ENCODE measurements at regions of chr20 and their contacts with region 1.

Region 1: GRCh38 chr20:45044084-45044573 is 56.8 kb downstream of the KCNS1 start:
- DNase-seq: peak; percentile 52
- ATAC-seq: peak; percentile 86
- H3K4me3 Mint-ChIP-seq: no peak overlapping the region
- H3K27ac Mint-ChIP-seq: peak overlapping the region; percentile 93
- H3K4me1 Mint-ChIP-seq: peaks cover 76% of the 10 kb centered on the region
- H3K27me3 Mint-ChIP-seq: no peaks in the 10 kb centered on the region

Region 2: GRCh38 chr20:45061244-45061643 is 17.1 kb after region 1 on chr20:
- CTCF ChIA-PET with region 1: interaction called, 32 read pairs
- POLR2A ChIA-PET with region 1: no interaction called
- intact Hi-C with region 1: no loop called
- DNase-seq: peak; percentile 32
- ATAC-seq: peak; percentile 94
- H3K4me3 Mint-ChIP-seq: no peak overlapping the region
- H3K27ac Mint-ChIP-seq: no peak overlapping the region
- H3K4me1 Mint-ChIP-seq: peaks cover 76% of the 10 kb centered on the region
- H3K27me3 Mint-ChIP-seq: no peaks in the 10 kb centered on the region

Region 3: DNA sequence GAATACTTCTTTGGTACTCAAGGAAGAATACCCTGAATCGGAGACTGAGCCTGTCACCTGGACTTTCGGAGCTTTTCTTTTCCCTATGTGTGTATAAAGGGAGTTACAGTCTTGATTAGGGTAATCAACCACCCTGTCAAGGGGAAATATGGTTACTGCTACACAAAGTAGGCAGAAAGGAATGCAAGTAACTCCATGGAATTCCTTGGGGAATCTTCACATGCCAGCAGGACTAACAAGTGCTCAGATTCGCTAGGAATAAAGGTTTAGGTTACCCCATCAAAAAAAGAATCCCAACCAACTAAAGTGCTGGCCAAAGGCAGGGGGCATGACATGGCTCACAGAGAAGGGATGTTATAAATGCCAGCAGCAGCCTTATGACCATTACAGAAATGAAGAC is 46.4 kb after region 1 on chr20:
- CTCF ChIA-PET with region 1: interaction called, 136 read pairs
- POLR2A ChIA-PET with region 1: interaction called, 7 read pairs
- intact Hi-C with region 1: loop called in 1 of 2 experiments (anchors 1 kb)
- DNase-seq: no peak
- ATAC-seq: no peak
- H3K4me3 Mint-ChIP-seq: no peak overlapping the region
- H3K27ac Mint-ChIP-seq: no peak overlapping the region
- H3K4me1 Mint-ChIP-seq: no peaks in the 10 kb centered on the region
- H3K27me3 Mint-ChIP-seq: no peaks in the 10 kb centered on the region

Region 4: DNA sequence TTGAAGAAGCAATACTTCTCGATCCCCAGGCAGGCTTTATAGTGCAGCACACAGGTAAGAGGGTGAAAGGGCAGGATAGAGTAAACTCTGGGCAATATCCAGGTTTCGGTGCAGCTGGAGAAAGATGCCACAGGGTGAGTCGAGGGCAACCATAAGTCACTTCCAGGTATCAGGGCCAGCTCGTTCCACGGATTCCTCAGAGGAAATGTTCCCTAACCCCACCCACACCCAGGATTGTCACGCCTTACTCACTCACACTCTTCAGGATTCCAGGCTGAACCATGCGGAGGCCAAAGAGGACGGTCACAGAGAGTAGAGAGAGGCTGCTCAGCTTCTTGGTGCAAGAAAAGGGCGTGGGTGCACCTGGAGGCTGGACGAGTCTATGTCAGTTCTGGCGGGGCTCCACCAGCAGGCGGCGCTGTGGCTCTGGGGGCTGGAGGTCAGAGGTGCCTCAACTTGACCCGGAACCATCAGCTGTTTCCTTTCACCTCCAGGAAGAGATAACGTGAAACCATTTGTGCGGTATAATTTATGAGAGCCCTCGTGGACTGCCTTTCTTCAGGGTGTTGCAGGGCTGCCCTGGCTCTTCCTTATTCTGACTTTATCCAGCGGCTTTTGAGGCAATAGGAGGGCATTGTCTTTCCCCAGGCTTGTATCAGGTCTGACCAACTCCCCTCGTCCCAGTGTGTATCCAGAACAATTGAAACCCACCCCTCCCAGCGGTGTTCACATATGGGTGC is 94.6 kb after region 1 on chr20:
- CTCF ChIA-PET with region 1: interaction called, 11 read pairs
- POLR2A ChIA-PET with region 1: no interaction called
- intact Hi-C with region 1: no loop called
- DNase-seq: peak; percentile 92
- ATAC-seq: peak; percentile 91
- H3K4me3 Mint-ChIP-seq: no peak overlapping the region
- H3K27ac Mint-ChIP-seq: no peak overlapping the region
- H3K4me1 Mint-ChIP-seq: no peaks in the 10 kb centered on the region
- H3K27me3 Mint-ChIP-seq: peaks cover 9% of the 10 kb centered on the region

Region 5: GRCh38 chr20:45347936-45348778 is 304.0 kb after region 1 on chr20 and contains the start of gene SDC4:
- CTCF ChIA-PET with region 1: no interaction called
- POLR2A ChIA-PET with region 1: no interaction called
- intact Hi-C with region 1: no loop called
- DNase-seq: peak; percentile 79
- ATAC-seq: peak; percentile 81
- H3K4me3 Mint-ChIP-seq: peak within 1 kb of the TSS; percentile 82
- H3K27ac Mint-ChIP-seq: peak within 1 kb of the TSS; percentile 81
- H3K4me1 Mint-ChIP-seq: peaks cover 44% of the 10 kb centered on the region
- H3K27me3 Mint-ChIP-seq: peaks cover 3% of the 10 kb centered on the region
- total RNA-seq, gene SDC4: 24.0 to 31.0 TPM

Region 6: DNA sequence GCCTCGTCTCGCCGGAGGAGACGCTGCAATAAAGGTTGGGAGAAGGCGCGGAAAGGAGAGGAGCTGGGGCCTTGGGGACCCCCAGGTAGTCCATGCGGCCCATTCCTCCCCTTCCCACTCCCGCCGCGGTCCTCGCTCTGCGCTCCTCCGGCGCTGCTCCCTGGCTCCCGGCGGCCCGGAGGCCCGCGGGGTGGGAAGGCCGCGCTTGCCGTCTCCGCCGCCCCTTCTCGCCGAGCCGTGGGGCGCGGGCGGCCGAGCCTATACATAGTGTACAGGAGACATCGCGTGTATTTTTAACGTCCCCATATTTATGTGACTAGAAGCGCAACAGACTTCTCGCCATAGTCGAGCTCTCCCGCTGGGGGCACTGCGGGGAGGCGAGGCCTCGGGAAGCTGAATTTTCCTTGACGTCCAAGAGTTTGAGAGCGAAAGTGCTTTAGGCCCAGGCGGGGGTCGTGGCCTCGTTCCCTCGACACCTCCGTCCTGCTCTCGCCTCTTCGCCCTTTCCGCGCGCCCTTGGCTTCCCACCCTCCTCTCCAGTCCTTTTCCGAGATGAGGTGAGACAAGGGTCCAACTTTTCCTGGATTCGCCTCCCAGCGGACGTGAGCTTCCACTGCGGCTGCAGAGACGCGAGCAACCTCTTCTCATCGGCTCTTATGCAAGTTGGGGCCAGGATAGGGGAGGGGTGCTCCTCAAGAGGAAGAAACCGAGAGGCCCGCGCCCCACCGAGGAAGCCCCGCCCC is 1013.9 kb after region 1 on chr20:
- CTCF ChIA-PET with region 1: no interaction called
- POLR2A ChIA-PET with region 1: no interaction called
- intact Hi-C with region 1: no loop called
- DNase-seq: peak; percentile 52
- ATAC-seq: peak; percentile 42
- H3K4me3 Mint-ChIP-seq: no peak overlapping the region
- H3K27ac Mint-ChIP-seq: no peak overlapping the region
- H3K4me1 Mint-ChIP-seq: peaks cover 42% of the 10 kb centered on the region
- H3K27me3 Mint-ChIP-seq: peaks cover 19% of the 10 kb centered on the region